SK-N-SH (cell line): ENCODE measurements at regions of chr17 and their contacts with region 1.

Region 1: DNA sequence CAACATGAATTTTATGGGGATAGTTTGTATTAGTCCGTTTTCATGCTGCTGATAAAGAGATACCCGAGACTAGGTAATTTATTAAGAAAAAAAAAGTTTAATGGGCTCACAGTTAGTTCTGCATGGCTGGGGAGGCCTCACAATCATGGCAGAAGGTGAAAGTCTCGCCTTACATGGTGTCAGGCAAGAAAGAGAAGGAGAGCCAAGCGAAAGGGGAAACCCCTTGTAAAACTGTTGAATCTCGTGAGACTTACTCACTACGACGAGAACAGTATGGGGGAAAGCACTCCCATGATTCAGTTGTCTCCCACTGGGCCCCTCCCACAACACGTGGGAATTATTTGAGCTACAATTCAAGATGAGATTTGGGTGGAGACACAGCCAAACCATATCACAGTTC is 181.5 kb downstream of the PRKCA start:
- DNase-seq: no peak
- H3K4me3 ChIP-seq: no peak overlapping the region
- H3K27ac ChIP-seq: no peak overlapping the region
- H3K4me1 ChIP-seq: no peaks in the 10 kb centered on the region; a peak in 1 of 4 replicates
- H3K27me3 ChIP-seq: no peaks in the 10 kb centered on the region
- CTCF ChIP-seq: no peak
- EP300 ChIP-seq: no peak
- RAD21 ChIP-seq: no peak

Region 2: DNA sequence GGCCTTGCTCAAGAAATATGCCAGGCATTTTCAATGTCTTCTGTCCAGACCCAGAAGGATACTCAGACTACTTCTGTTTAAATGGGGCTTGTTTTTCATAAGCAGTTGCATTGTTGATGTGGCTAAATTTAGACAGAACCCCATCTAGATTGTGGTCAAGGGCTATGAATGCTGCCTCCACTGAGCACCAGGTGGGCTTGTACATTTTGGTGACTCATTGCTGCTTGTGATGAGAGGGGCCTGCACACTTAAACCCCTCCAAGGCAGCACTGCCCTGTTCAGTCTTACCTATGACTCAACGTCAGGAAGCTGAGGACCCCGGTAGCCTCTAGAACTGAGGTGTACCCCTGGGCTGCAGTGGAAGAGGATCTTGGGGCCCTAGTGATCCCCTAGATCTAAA is 37.5 kb before region 1 on chr17:
- CTCF ChIA-PET with region 1: no interaction called
- POLR2A ChIA-PET with region 1: no interaction called
- DNase-seq: no peak
- H3K4me3 ChIP-seq: no peak overlapping the region
- H3K27ac ChIP-seq: no peak overlapping the region
- H3K4me1 ChIP-seq: peaks cover 6 to 33% of the 10 kb centered on the region in 2 experiments; a peak in 3 of 4 replicates
- H3K27me3 ChIP-seq: no peaks in the 10 kb centered on the region
- CTCF ChIP-seq: no peak
- EP300 ChIP-seq: no peak
- RAD21 ChIP-seq: no peak

Region 3: DNA sequence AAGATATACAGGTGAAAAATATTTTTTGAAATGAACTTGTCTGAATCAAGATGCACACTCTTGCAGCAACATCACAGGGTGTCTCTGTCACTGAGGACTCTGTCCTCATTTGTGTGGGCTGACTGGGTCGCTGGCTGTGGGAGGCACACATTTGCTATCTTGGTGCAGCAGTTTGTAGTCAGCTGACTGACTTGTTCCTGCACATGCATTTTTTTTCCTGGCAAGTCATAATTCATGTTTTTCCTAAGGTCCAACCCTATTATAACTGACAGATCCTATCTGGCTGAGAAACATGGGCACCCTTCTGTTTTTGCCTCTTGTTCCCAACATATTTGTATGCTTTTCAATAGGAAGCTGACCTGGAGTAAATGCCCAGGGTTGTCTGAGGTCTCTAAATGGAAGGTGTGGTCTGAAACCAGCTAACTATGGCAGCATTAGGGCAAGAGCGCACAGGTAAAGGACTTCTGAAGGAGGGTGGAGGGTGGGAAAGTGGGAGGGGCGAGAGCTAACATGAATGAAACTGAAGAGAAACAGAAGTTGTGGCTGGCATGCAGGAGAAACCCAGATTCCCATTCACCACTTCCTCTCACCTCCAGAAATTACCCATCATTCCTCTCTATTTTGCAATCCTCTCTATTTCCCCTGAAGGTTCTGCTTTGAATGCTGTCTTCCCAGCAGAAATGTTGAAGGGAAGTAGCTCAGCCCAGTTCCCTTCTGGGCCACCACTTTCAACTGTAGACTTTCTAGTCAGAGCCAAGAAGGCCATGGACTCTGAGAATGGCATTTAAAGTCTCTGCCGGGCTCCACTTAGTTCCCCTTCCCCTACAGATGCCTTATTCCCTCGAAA is 15.4 kb before region 1 on chr17:
- CTCF ChIA-PET with region 1: interaction called, 19 read pairs
- POLR2A ChIA-PET with region 1: interaction called, 3 read pairs
- DNase-seq: no peak
- H3K4me3 ChIP-seq: no peak overlapping the region
- H3K27ac ChIP-seq: peak overlapping the region; percentile 54 to 92; a peak in 3 of 4 replicates
- H3K4me1 ChIP-seq: peaks cover 26 to 55% of the 10 kb centered on the region in 2 experiments
- H3K27me3 ChIP-seq: no peaks in the 10 kb centered on the region
- CTCF ChIP-seq: no peak
- EP300 ChIP-seq: no peak
- RAD21 ChIP-seq: no peak

Region 4: DNA sequence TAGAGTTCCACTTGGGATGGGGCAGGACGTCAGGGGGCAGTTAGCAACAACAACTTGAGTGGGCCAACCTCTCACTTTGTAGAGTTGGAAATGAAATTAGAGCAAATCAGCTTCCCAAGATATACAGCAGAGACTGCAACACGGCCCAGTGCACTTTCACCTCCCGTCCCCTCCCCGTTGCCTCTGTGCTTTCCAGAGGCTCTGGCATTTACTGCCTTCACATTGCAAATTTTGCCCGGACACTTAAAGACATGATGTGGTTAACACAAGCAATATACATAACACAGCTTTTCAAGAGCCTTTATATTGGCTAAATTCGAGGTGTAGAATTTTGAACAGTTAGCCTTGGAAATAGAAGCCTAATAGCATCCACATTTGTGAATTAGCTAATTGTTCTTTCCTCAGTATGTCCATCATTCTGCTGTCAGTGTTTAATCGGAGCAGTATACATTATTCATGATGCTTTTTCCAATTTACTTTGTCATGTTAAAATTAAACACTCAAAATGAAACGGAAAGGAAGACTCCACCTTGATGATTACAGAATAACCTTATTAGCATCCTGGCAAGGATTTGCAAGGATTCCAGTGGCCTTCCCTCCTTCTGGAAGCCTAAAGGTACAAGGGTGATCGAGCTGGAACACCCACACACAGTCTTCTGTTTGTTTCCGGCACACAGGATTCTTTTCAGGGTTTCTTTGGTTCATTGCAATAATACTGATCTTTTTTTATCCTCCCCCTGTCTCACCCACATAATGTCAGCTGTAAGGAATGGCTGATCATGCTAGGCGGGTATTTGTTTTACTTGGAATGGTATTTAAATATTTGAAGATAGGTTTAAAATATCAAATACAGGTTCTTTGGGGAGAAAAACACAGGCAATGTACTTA is 160.2 kb after region 1 on chr17:
- CTCF ChIA-PET with region 1: no interaction called
- POLR2A ChIA-PET with region 1: no interaction called
- DNase-seq: no peak
- H3K4me3 ChIP-seq: no peak overlapping the region
- H3K27ac ChIP-seq: no peak overlapping the region
- H3K4me1 ChIP-seq: peaks cover 0 to 3% of the 10 kb centered on the region in 2 experiments; a peak in 1 of 4 replicates
- H3K27me3 ChIP-seq: no peaks in the 10 kb centered on the region
- CTCF ChIP-seq: no peak
- EP300 ChIP-seq: no peak
- RAD21 ChIP-seq: no peak